ENCODE measurements at regions of chr10 and their contacts with region 1.

Region 1: DNA sequence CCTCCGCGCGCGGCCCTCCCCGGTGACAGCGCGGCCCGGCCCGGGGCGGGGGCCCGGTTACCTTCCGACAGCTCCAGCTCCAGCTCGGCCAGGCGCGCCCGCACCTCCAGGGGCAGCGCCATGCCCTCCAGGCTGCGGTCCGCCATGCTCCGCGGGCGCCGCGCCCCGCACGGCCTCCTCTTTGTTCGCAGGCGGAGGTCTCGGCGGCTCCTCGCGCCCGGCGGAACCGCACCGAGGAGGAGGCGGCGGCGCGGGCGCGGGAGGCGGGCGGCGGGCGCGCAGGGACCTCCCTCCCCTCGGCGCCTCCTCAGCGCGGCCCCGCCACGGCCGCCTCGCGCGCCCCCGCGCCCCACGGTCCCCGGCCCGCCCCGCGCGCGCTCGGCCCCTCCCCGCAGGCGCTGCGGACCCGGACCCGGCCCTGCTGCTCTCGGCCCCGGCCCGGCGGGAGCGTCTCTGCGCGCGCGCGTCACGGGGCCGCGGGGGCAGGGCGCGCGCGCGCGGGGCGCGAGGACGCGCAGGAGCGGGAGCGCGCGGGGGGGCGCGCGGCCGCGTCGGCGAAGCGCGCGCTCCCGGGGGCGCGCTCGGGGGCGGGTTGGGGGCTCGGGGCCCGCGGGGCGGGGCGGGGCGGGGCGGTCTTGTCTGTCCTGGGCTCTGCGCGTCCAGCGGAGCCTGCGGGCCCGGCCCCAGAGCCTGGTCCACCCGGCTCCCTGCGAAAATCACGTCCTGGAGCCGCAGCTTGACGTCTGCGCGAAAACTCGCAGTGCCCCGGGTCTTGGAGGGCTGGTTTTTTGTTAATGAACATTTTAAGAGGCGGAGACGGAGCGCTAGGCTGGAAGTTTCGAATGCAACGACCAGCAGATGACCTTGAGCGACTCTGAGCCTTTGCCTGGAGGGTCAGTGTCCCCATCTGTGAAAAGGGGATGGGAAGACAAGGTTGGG is at the start of gene DIP2C:
- DNase-seq: peak; percentile 92
- H3K4me3 ChIP-seq: peak within 1 kb of the TSS; percentile 82 to 97 (median 90)
- H3K27ac ChIP-seq: peak within 1 kb of the TSS; percentile 95 to 99 (median 98)
- H3K4me1 ChIP-seq: peaks cover 0 to 48% (median 31%) of the 10 kb centered on the region in 4 donors
- H3K27me3 ChIP-seq: no peaks in the 10 kb centered on the region
- CTCF ChIP-seq: no peak
- EP300 ChIP-seq: no peak
- POLR2A ChIP-seq: peak in 1 of 2 donors; percentile 12
- total RNA-seq, gene DIP2C: 42.1 to 67.9 (median 50.3) TPM

Region 2: GRCh38 chr10:373522-374309 is 316.0 kb before region 1 on chr10:
- intact Hi-C with region 1: loop called (anchors 5 kb)
- DNase-seq: peak; percentile 84
- H3K4me3 ChIP-seq: no peak overlapping the region
- H3K27ac ChIP-seq: peak overlapping the region in 3 of 4 donors; percentile 70 to 91 (median 80)
- H3K4me1 ChIP-seq: peaks cover 0 to 74% (median 66%) of the 10 kb centered on the region in 4 donors
- H3K27me3 ChIP-seq: no peaks in the 10 kb centered on the region
- CTCF ChIP-seq: no peak
- EP300 ChIP-seq: peak in 3 of 4 donors; percentile 4 to 88 (median 84)
- POLR2A ChIP-seq: no peak

Region 3: GRCh38 chr10:511101-511848 is 178.4 kb before region 1 on chr10:
- intact Hi-C with region 1: loop called (anchors 1 kb)
- DNase-seq: peak; percentile 96
- H3K4me3 ChIP-seq: peak overlapping the region in 1 of 4 donors; percentile 7
- H3K27ac ChIP-seq: peak overlapping the region; percentile 67 to 92 (median 79)
- H3K4me1 ChIP-seq: peaks cover 0 to 73% (median 61%) of the 10 kb centered on the region in 4 donors
- H3K27me3 ChIP-seq: no peaks in the 10 kb centered on the region
- CTCF ChIP-seq: peak; percentile 91 to 98 (median 96)
- EP300 ChIP-seq: peak in 1 of 4 donors; percentile 52
- POLR2A ChIP-seq: no peak

Region 4: GRCh38 chr10:649798-650440 is 39.8 kb before region 1 on chr10:
- intact Hi-C with region 1: loop called (anchors 5 kb)
- DNase-seq: peak; percentile 92
- H3K4me3 ChIP-seq: peak overlapping the region; percentile 39 to 52 (median 45)
- H3K27ac ChIP-seq: peak overlapping the region; percentile 80 to 96 (median 89)
- H3K4me1 ChIP-seq: peaks cover 0 to 62% (median 53%) of the 10 kb centered on the region in 4 donors
- H3K27me3 ChIP-seq: no peaks in the 10 kb centered on the region
- CTCF ChIP-seq: no peak
- EP300 ChIP-seq: peak; percentile 95 to 99 (median 99)
- POLR2A ChIP-seq: peak; percentile 60 to 74

Region 5: DNA sequence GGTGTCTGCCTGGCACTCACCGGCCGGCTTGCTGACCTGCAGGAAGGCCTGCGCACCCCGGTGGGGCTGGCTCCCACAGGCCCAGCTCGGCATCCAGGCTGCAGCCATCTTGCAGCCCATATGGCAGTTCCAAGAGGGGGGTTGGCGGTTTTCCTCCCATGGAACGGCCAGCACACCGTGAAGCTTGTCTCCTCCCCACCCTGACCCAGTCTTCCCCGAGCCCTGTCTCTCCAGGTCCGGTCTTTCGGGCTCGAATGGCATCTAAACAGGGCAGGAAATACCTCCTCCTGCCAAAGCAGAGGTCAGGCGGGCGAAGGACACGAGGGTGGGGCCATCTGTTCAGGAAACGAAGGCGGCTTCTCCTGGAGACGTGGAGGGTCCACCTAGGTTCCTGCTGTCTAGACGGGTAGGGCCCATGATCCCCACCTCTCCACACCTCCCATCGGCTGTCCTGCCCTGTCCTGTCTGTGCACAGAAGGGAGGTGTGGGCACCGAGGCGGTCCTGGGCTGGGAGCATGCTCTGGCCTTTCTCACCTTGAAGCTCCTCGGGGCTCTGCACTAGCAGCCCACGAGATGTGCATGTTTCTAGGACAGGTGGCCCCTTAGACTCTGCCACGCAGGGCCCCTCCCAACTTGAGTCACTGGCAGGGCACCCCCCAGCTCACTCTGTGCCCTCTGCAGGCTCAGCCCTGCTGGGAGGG is 113.5 kb after region 1 on chr10:
- intact Hi-C with region 1: no loop called
- DNase-seq: peak; percentile 60
- H3K4me3 ChIP-seq: no peak overlapping the region
- H3K27ac ChIP-seq: no peak overlapping the region
- H3K4me1 ChIP-seq: peaks cover 0 to 7% (median 0%) of the 10 kb centered on the region in 4 donors
- H3K27me3 ChIP-seq: no peaks in the 10 kb centered on the region
- CTCF ChIP-seq: no peak
- EP300 ChIP-seq: no peak
- POLR2A ChIP-seq: no peak

Region 6: DNA sequence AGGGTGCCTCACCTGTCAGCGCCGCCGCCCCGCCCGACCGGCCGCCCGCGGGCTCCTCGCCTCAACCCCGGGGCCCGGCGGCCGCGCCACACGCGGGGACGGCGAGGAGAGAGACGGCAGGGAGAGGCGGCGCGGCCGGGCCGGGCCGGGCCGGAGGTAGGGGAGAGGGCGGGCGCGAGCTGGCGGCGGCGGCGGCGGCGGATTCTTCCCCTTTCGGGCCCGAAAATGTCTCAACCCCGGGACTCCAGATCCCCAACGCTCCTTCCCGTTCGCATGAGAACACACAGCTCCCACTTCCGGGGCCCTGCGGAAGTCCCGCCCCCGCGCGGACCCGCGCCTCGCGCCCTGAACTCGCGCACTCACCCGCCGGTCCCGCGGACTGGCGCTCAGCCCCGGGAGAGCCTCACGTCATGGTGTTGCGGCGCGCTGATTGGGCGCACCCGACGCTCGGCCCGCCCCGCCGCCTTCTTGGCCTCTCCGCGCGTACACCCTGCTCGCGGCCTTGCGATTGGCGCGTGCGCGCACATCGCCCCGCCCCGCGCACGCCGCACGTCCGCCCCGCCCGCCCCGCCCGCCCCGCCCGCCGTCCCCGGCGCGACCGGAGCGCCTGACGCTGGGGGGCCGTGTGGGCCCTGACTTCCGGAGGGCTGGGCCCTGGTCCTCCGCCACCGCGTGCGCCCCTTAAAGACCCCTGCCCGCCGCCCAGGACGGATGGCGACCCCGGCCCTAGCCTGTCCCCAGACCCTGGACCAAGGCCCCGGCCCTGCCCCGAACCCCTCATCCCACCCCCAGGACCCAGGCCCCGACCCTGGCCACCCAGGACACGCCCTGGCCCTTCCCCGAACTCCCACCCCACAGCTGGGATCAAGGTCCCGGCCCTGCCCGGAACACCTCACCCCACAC is 242.0 kb after region 1 on chr10 and contains the start of gene LARP4B:
- intact Hi-C with region 1: loop called (anchors 5 kb)
- DNase-seq: peak; percentile 98
- H3K4me3 ChIP-seq: peak within 1 kb of the TSS; percentile 88 to 94 (median 90)
- H3K27ac ChIP-seq: peak within 1 kb of the TSS; percentile 96 to 99 (median 98)
- H3K4me1 ChIP-seq: peaks cover 0 to 44% (median 36%) of the 10 kb centered on the region in 4 donors
- H3K27me3 ChIP-seq: no peaks in the 10 kb centered on the region
- CTCF ChIP-seq: no peak
- EP300 ChIP-seq: peak in 1 of 4 donors; percentile 5
- POLR2A ChIP-seq: peak; percentile 17 to 19
- total RNA-seq, gene LARP4B: 31.7 to 57.6 (median 40.8) TPM